ENCODE measurements at regions of chr21 and their contacts with region 1.

Region 1: GRCh38 chr21:14414932-14415508 is 32.1 kb upstream of the HSPA13 start:
- DNase-seq: no peak
- ATAC-seq: no peak

Region 2: DNA sequence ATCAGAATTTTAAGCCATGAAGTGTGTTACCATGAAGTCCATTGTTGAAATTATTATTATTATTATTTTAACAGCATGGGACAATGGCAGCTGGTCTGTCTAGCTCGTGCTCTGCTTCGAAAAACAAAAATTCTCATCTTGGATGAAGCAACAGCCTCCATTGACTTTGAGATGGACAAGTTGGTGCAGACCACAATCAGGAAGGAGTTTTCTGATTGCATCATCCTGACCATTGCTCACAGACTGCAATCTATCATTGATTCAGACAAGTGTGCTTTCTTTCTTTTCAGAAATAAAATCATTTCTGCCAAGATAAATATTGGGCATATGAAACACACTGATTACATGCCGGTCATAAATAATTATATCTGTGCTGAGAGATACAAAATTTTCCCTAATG is 53.1 kb before region 1 on chr21:
- intact Hi-C with region 1: no loop called
- DNase-seq: no peak
- ATAC-seq: peak in 1 of 2 donors; percentile 84

Region 3: GRCh38 chr21:14850394-14850793 is 435.4 kb after region 1 on chr21:
- intact Hi-C with region 1: loop called in 1 of 2 experiments (anchors 10 kb)
- DNase-seq: no peak
- ATAC-seq: no peak

Measured in left cardiac atrium (tissue), 4 donors.